Activated B cell treated with CpG ODN at 0.5 μM for 24 hours (primary cell): ENCODE measurements at regions of chr21 and their contacts with region 1.

Region 1: GRCh38 chr21:42392721-42393442 is 3.0 kb downstream of the TMPRSS3 start:
- DNase-seq: no peak
- ATAC-seq: peak; percentile 83
- H3K4me3 Mint-ChIP-seq: peak overlapping the region; percentile 22
- H3K27ac Mint-ChIP-seq: peak overlapping the region; percentile 4
- H3K4me1 Mint-ChIP-seq: peaks cover 34% of the 10 kb centered on the region
- H3K27me3 Mint-ChIP-seq: peaks cover 7% of the 10 kb centered on the region
- CTCF ChIP-seq: no peak

Region 2: GRCh38 chr21:40829308-40830175 is 1563.3 kb before region 1 on chr21:
- CTCF ChIA-PET with region 1: no interaction called
- POLR2A ChIA-PET with region 1: no interaction called
- intact Hi-C with region 1: no loop called
- DNase-seq: no peak
- ATAC-seq: no peak
- H3K4me3 Mint-ChIP-seq: no peak overlapping the region
- H3K27ac Mint-ChIP-seq: no peak overlapping the region
- H3K4me1 Mint-ChIP-seq: no peaks in the 10 kb centered on the region
- H3K27me3 Mint-ChIP-seq: no peaks in the 10 kb centered on the region
- CTCF ChIP-seq: no peak

Region 3: DNA sequence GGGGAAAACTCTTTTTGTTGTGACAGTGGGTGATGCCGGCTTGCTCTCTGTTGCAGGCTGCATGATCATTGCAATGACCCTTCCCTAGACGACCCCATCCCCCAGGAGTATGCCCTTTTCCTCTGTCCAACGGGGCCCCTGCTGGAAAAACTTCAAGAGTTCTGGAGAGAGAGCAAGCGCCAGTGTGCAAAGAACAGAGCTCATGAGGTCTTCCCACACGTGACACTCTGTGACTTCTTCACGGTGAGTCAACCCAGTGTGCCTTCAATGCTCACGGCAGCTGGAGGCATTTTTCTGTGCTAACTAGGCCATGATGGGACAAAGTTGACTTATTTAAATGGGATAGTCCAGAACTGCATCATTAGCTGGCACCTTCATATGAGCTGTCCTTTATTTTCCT is 16.5 kb after region 1 on chr21:
- CTCF ChIA-PET with region 1: no interaction called
- POLR2A ChIA-PET with region 1: interaction called, 10 read pairs
- intact Hi-C with region 1: loop called (anchors 2 kb)
- DNase-seq: no peak
- ATAC-seq: no peak
- H3K4me3 Mint-ChIP-seq: no peak overlapping the region
- H3K27ac Mint-ChIP-seq: no peak overlapping the region
- H3K4me1 Mint-ChIP-seq: peaks cover 15% of the 10 kb centered on the region
- H3K27me3 Mint-ChIP-seq: peaks cover 2% of the 10 kb centered on the region
- CTCF ChIP-seq: no peak